ENCODE measurements at regions of chr2 and their contacts with region 1.

Region 1: GRCh38 chr2:197113275-197113711 is 186.8 kb upstream of the PGAP1 start:
- DNase-seq: peak; percentile 48
- CTCF ChIP-seq: peak; percentile 49

Region 2: GRCh38 chr2:197097578-197098366 is 15.5 kb before region 1 on chr2:
- CTCF ChIA-PET with region 1: interaction called, 27 read pairs
- POLR2A ChIA-PET with region 1: no interaction called
- DNase-seq: no peak
- CTCF ChIP-seq: no peak

Region 3: DNA sequence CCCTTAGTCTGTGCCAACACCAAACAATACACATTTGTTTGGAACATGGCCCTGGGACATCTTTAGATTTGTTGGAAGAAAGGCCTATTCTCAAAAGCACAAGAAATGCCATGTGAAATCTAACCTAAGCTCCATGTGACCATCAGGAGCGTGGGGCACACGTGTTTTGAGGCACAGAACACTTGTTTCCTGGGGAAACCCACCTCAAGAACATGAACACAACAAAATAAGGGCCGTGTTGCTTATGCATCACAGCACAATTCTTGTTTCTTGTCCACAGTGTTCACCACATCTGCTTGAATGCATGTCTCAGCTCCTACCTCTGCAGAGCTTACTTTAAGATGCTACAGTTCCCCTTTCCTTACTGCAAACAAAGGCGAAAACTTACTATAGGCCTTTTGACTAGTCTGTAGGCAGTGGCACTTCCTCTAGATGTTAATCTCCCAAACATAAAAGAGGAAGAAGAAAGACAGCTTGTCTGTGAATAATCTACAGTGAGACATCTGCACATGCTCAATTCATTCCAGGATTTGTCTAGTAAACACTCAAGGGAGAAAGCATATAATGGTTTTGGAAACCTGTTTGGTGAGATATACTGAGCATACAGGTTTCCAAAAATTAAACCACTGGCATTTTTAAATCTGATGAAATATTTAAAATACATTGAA is 32.3 kb after region 1 on chr2:
- CTCF ChIA-PET with region 1: interaction called, 15 read pairs
- POLR2A ChIA-PET with region 1: no interaction called
- DNase-seq: peak; percentile 68
- CTCF ChIP-seq: no peak

Region 4: DNA sequence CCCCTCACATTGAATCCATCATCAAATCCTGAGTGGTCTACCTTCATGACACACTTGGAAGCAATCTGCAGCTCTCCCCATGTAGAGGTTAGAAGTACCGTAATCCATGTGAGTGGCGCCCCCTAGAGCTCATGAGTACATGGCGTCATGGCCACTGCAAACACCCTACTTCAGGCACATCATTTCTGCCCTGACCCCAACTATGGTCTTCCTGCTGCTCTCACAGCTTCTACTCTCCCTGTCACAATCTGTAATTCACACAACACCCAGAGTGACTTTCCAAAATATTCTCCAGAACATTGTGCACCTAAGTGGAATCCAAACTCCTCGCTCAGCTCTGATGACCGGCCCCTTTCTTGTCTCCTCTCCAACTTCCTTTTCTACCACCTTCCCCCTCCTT is 55.4 kb after region 1 on chr2:
- CTCF ChIA-PET with region 1: interaction called, 81 read pairs
- POLR2A ChIA-PET with region 1: no interaction called
- DNase-seq: peak; percentile 61
- CTCF ChIP-seq: peak; percentile 70

Region 5: DNA sequence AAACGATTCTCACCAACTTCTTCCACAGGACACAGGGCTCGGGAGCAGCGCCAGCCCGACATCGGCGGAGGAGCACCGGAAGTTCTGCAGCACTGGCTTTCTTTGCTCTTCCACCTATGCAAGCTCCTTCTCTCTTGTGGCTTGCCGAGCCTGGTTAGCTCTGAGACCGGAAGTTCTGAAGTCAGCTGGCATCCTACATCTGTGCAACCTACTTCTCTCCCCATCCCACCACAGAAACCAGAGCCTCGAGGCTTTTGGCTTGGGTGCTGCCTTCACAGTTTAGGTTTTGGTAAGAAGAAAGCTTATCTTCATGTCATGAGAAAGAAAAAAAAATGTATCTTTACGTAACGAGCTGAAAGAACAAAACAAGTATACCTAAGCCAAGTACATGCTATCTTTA is 85.6 kb after region 1 on chr2:
- CTCF ChIA-PET with region 1: interaction called, 13 read pairs
- POLR2A ChIA-PET with region 1: no interaction called
- DNase-seq: peak; percentile 80
- CTCF ChIP-seq: no peak

Region 6: DNA sequence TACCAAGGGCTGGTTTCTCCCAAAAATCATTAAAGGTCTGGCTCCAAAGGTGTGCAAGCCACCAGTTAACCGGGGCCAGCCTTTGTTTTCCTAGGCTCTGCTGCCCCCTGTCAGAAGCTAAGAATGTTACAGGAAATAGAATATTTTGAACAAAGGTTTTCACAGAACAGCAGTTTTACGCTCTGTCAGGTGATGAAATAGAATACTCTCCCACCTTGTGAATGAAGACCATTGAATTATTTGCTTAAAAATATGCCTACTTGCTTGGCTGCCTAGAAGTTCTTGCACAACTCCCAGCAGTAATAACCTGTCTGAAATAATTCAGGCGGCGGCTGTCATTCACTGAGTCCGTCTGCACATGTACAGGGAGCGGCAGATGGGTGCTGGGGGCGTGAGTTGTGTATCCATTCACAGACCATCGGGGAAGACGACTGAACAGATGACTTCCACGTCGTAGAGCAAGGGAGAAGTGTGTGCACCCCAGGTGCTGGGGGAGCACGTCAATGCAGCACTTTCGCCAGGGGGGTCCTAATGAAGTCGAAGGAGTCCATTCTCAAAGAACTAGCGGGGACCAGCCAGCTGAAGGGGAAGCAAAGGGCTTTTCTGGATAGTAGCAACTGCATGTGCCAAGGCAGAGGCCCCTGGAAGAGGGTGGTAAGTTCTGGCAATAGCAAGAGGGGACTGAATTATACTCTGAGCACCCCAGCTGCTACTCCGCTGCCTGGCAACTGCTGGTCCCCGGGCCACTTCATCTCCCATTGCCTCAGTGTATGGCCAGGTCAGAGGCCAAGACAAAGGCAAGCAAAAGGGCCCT is 265.4 kb after region 1 on chr2:
- CTCF ChIA-PET with region 1: interaction called, 23 read pairs
- POLR2A ChIA-PET with region 1: no interaction called
- DNase-seq: peak; percentile 70
- CTCF ChIP-seq: peak; percentile 72